Right ventricle myocardium superior (tissue), 1 donor: ENCODE measurements at regions of chr17 and their contacts with region 1.

Region 1: GRCh38 chr17:17313350-17313991 is 10.3 kb downstream of the NT5M start:
- DNase-seq: peak; percentile 56
- ATAC-seq: peak; percentile 73

Region 2: GRCh38 chr17:17141860-17142552 is 171.5 kb before region 1 on chr17:
- intact Hi-C with region 1: loop called (anchors 10 kb)
- DNase-seq: peak; percentile 58
- ATAC-seq: peak; percentile 56